OCI-LY7 (cell line): ENCODE measurements at regions of chr11 and their contacts with region 1.

Region 1: GRCh38 chr11:8566613-8567210 is 27.3 kb downstream of the STK33 start:
- DNase-seq: peak; percentile 52
- H3K4me3 ChIP-seq: no peak overlapping the region
- H3K27ac ChIP-seq: no peak overlapping the region
- H3K4me1 ChIP-seq: no peaks in the 10 kb centered on the region
- CTCF ChIP-seq: peak; percentile 87

Region 2: GRCh38 chr11:8192016-8192895 is 374.5 kb before region 1 on chr11:
- CTCF ChIA-PET with region 1: no interaction called
- POLR2A ChIA-PET with region 1: no interaction called
- intact Hi-C with region 1: loop called (anchors 10 kb)
- DNase-seq: peak; percentile 54
- H3K4me3 ChIP-seq: no peak overlapping the region
- H3K27ac ChIP-seq: no peak overlapping the region
- H3K4me1 ChIP-seq: no peaks in the 10 kb centered on the region
- CTCF ChIP-seq: peak; percentile 83

Region 3: DNA sequence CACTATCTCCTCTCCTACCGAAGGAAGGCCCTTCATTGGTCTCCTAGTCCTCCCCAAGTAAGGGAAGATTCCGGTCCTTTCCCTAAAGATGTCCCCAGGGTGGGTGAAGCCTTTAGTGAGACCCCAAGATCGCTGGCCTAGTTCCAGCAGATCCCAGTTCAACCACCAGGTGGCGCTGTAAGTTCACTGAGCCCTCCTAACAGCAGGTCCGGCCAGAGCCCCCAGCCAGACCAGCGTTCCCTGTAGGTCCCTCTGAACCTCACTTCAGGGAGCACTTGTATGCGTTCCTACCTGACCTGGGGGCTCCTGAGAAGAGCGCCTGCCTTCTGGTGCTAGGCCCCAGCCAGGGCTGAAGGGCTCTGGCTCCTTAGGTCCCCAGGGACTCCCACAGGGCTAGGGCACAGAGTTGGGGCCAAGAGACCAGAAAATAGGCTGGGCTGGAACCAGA is 341.1 kb before region 1 on chr11:
- CTCF ChIA-PET with region 1: no interaction called
- POLR2A ChIA-PET with region 1: no interaction called
- intact Hi-C with region 1: loop called (anchors 2 kb)
- DNase-seq: peak; percentile 56
- H3K4me3 ChIP-seq: no peak overlapping the region
- H3K27ac ChIP-seq: no peak overlapping the region
- H3K4me1 ChIP-seq: no peaks in the 10 kb centered on the region
- CTCF ChIP-seq: peak; percentile 93

Region 4: GRCh38 chr11:8338138-8338537 is 228.6 kb before region 1 on chr11:
- CTCF ChIA-PET with region 1: no interaction called
- POLR2A ChIA-PET with region 1: no interaction called
- intact Hi-C with region 1: loop called (anchors 10 kb)
- DNase-seq: peak; percentile 21
- H3K4me3 ChIP-seq: no peak overlapping the region
- H3K27ac ChIP-seq: no peak overlapping the region
- H3K4me1 ChIP-seq: no peaks in the 10 kb centered on the region
- CTCF ChIP-seq: peak; percentile 86

Region 5: GRCh38 chr11:9078113-9079086 is 511.7 kb after region 1 on chr11:
- CTCF ChIA-PET with region 1: no interaction called
- POLR2A ChIA-PET with region 1: no interaction called
- intact Hi-C with region 1: no loop called
- DNase-seq: no peak
- H3K4me3 ChIP-seq: no peak overlapping the region
- H3K27ac ChIP-seq: no peak overlapping the region
- H3K4me1 ChIP-seq: no peaks in the 10 kb centered on the region
- CTCF ChIP-seq: 0 out of 2 replicates have a peak, but pooled peaks have one; percentile 25